AG04449 (cell line): ENCODE measurements at regions of chr22 and their contacts with region 1.

Region 1: GRCh38 chr22:27474711-27475547 is 326.6 kb downstream of the MN1 start:
- DNase-seq: peak; percentile 71
- H3K4me3 ChIP-seq: no peak overlapping the region; the same call in 1 of the 2 replicates
- CTCF ChIP-seq: no peak

Region 2: DNA sequence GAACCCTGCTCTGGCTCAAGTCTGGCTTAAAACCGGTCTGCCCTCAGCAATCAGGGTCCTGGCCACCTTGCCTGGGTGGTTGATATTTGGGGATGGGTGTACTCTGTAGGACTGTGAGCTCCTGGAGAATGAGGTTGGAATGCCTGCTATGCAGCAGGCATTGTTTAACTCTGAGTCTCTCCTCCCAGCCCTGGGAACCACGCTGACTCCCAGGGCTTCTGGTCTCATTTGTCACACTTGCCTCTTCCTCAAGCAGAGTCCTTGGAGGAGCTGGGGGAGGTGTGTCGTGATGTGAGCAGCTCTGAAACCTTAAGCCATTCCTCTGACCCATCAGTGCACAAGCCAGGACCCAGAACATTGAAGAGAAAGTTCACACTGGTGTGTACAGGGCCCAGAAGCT is 13.5 kb before region 1 on chr22:
- CTCF ChIA-PET with region 1: interaction called, 29 read pairs
- POLR2A ChIA-PET with region 1: interaction called, 7 read pairs
- DNase-seq: peak; percentile 80
- H3K4me3 ChIP-seq: no peak overlapping the region
- CTCF ChIP-seq: no peak

Region 3: DNA sequence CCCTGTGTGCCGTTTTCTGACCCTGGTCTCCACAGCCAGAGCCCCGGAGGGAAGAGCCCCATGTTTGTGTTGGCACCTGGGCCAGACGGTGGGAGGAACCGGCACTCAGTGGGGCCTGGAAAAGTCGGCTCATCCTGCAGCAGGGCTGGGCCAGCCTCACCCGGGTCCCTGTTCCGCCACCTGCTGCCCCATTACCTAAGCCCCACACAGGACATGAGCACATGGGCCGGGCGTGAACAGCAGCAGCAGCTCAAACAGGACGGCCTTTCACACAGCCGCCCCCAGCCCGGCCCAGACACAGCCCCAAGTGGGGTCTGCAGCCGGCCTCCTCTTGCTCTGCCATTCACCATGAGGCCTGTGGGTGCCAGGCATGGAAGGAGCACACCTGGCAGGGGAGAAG is 24.2 kb after region 1 on chr22:
- CTCF ChIA-PET with region 1: no interaction called
- POLR2A ChIA-PET with region 1: no interaction called
- DNase-seq: no peak
- H3K4me3 ChIP-seq: no peak overlapping the region
- CTCF ChIP-seq: no peak